ENCODE measurements at regions of chr11 and their contacts with region 1.

Region 1: DNA sequence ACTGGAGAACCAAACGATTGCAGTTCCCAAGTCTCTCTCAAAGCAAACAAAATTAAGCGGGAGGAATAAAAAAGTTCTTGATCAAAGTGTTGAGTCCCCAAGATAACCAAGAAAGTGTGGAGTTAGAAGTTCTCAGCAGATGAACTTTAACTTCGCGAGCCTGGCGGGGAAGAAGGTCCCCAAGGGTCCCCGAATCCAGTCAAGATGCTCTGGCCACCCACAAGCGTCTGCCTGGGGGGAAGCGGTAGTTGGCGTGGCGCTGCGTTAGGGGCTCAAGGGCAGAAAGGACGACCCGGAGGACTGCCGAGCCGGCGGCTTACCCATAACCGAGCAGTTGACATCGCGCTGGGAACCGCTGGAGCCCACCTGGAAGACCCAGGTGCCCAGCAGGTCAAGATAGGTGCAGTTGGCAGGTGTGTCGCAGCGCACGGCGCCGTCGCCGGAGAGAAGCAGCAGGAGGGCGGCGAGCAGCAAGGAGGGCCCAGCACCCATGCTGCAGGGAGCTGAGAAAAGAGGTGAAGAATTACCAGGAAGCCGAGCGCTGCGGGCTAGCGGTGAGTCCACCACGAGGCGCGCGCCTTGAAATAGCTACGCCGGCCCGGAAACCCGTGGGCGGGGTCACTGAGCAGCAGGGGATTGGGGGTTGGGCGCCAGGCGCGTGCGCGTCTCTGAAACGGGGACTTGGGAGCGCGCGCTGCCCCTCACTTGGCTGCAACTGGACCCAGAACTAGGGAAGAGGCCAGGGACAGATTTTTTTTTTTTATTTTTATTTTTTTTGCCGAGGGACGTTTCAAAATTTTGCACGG is at the start of gene CTSC:
- DNase-seq: peak; percentile 80
- ATAC-seq: peak; percentile 91
- H3K4me3 Mint-ChIP-seq: peak within 1 kb of the TSS; percentile 100
- H3K27ac Mint-ChIP-seq: peak within 1 kb of the TSS; percentile 86
- H3K4me1 Mint-ChIP-seq: peaks cover 43% of the 10 kb centered on the region
- H3K27me3 Mint-ChIP-seq: no peaks in the 10 kb centered on the region
- CTCF ChIP-seq: no peak
- total RNA-seq, gene CTSC: 30.6 and 31.2 TPM in 2 replicates

Region 2: DNA sequence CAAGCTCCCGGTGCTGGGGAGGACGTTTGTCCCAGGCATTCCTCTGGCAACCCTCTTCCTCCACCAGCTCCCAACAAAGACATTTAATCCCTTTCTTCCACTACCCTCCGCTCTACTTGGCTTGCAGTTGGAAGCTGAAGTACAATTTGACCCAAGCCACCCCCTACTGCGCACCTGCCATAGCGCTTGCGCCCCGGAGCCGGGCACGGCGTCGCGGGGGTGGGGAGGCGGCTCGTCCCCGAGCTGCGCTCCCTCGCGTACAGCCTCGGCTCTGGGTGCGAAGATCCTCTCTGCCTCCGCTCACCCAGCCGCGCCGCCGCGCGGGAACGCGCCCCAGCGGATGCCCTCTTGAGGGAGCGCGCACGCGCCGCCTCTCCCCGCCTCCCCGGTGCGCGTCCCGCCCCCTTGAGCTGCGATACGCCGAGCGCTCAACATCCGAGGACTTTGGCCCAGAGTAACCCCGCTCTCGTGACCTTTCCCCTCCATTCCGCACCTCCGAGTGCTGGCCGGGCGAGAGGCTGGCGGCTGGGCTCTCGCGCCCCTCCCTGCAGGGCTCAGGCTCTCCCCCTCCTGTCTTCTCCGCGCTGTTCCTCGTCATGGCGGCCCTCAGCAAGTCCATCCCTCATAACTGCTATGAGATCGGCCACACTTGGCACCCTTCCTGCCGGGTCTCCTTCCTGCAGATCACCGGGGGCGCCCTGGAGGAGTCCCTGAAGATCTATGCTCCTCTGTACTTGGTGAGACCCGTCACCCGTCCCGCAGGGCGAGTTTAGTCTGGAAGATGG is 1299.7 kb before region 1 on chr11 and contains the start of gene TMEM135:
- CTCF ChIA-PET with region 1: no interaction called
- POLR2A ChIA-PET with region 1: no interaction called
- intact Hi-C with region 1: loop called (anchors 1 kb)
- DNase-seq: peak; percentile 91
- ATAC-seq: peak; percentile 96
- H3K4me3 Mint-ChIP-seq: peak within 1 kb of the TSS; percentile 99
- H3K27ac Mint-ChIP-seq: peak within 1 kb of the TSS; percentile 75
- H3K4me1 Mint-ChIP-seq: peaks cover 34% of the 10 kb centered on the region
- H3K27me3 Mint-ChIP-seq: no peaks in the 10 kb centered on the region
- CTCF ChIP-seq: no peak
- total RNA-seq, gene TMEM135: 7.4 and 10.1 TPM in 2 replicates

Region 3: GRCh38 chr11:88231894-88232482 is 105.4 kb before region 1 on chr11:
- CTCF ChIA-PET with region 1: no interaction called
- POLR2A ChIA-PET with region 1: no interaction called
- intact Hi-C with region 1: loop called (anchors 5 kb)
- DNase-seq: no peak
- ATAC-seq: no peak
- H3K4me3 Mint-ChIP-seq: no peak overlapping the region
- H3K27ac Mint-ChIP-seq: no peak overlapping the region
- H3K4me1 Mint-ChIP-seq: no peaks in the 10 kb centered on the region
- H3K27me3 Mint-ChIP-seq: no peaks in the 10 kb centered on the region
- CTCF ChIP-seq: no peak

Region 4: DNA sequence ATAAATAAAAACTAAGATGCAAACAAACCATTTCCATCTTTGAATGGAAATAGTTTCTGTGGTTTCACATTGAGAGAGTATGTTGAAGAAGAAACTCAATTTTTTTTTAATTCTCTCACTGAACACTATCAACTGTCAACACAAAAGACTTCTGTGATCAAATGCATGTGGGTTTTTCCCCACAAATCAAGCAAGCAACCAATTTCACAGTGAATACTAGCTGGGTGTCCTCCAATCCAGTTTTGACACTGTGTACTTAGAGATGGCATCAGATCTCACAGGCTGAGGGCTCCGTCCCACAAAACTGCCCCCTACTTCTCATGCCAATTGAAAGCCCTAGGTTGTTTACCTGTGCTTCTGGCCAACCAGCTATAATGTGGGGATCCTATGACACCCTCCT is 34.3 kb before region 1 on chr11:
- CTCF ChIA-PET with region 1: no interaction called
- POLR2A ChIA-PET with region 1: interaction called, 7 read pairs
- intact Hi-C with region 1: loop called (anchors 1 kb)
- DNase-seq: no peak
- ATAC-seq: no peak
- H3K4me3 Mint-ChIP-seq: no peak overlapping the region
- H3K27ac Mint-ChIP-seq: peak overlapping the region; percentile 6
- H3K4me1 Mint-ChIP-seq: peaks cover 27% of the 10 kb centered on the region
- H3K27me3 Mint-ChIP-seq: no peaks in the 10 kb centered on the region
- CTCF ChIP-seq: no peak

Region 5: GRCh38 chr11:88327061-88327460 is 10.3 kb before region 1 on chr11:
- CTCF ChIA-PET with region 1: no interaction called
- POLR2A ChIA-PET with region 1: interaction called, 20 read pairs
- intact Hi-C with region 1: loop called (anchors 1 kb)
- DNase-seq: no peak
- ATAC-seq: peak; percentile 47
- H3K4me3 Mint-ChIP-seq: no peak overlapping the region
- H3K27ac Mint-ChIP-seq: no peak overlapping the region
- H3K4me1 Mint-ChIP-seq: peaks cover 46% of the 10 kb centered on the region
- H3K27me3 Mint-ChIP-seq: no peaks in the 10 kb centered on the region
- CTCF ChIP-seq: no peak

Region 6: GRCh38 chr11:88353835-88354496 is 16.6 kb after region 1 on chr11:
- CTCF ChIA-PET with region 1: no interaction called
- POLR2A ChIA-PET with region 1: interaction called, 26 read pairs
- intact Hi-C with region 1: loop called (anchors 1 kb)
- DNase-seq: no peak
- ATAC-seq: no peak
- H3K4me3 Mint-ChIP-seq: peak overlapping the region; percentile 41
- H3K27ac Mint-ChIP-seq: peak overlapping the region; percentile 57
- H3K4me1 Mint-ChIP-seq: peaks cover 32% of the 10 kb centered on the region
- H3K27me3 Mint-ChIP-seq: no peaks in the 10 kb centered on the region
- CTCF ChIP-seq: no peak

Region 7: GRCh38 chr11:88552377-88553062 is 215.1 kb after region 1 on chr11:
- CTCF ChIA-PET with region 1: no interaction called
- POLR2A ChIA-PET with region 1: no interaction called
- intact Hi-C with region 1: no loop called
- DNase-seq: peak; percentile 21
- ATAC-seq: peak; percentile 40
- H3K4me3 Mint-ChIP-seq: no peak overlapping the region
- H3K27ac Mint-ChIP-seq: no peak overlapping the region
- H3K4me1 Mint-ChIP-seq: no peaks in the 10 kb centered on the region
- H3K27me3 Mint-ChIP-seq: peaks cover 4% of the 10 kb centered on the region
- CTCF ChIP-seq: no peak

Region 8: DNA sequence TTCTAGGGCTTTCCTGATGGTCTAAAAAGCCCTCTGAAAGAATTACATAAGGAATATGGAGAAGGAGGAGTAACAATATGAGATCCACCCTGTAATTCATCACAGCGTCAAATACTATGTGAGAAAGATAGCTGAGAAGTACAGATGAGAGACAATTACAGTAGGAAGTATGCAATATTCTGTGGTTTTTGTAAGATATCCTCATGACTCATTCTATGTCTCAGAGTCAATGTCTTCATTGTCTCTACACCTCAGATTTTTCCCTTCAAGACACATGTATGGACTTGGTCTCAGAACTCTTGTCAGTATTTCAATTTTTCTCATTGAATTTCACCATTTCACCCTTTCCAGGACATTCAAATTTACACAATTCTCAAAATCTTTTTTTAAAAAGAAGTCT is 343.4 kb after region 1 on chr11:
- CTCF ChIA-PET with region 1: no interaction called
- POLR2A ChIA-PET with region 1: no interaction called
- intact Hi-C with region 1: no loop called
- DNase-seq: no peak
- ATAC-seq: no peak
- H3K4me3 Mint-ChIP-seq: no peak overlapping the region
- H3K27ac Mint-ChIP-seq: no peak overlapping the region
- H3K4me1 Mint-ChIP-seq: no peaks in the 10 kb centered on the region
- H3K27me3 Mint-ChIP-seq: no peaks in the 10 kb centered on the region
- CTCF ChIP-seq: no peak

Region 9: DNA sequence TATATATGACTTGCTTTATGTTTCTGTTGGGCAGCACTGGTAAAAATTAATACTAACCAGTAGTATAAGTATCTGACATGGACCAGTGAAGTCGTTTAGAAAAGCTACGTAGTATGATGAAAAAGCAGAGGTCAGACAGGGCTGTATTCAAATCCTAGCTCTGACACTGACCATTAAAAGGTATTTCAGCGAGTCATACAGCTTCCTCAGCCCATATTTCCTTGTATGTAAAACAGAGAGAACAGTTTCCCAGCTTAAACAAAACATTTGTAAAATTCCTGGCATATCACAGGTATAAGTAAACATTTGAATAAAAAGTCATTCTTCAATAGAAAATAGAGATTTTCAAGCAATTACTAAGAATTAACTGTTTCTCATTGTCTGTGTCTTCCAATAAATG is 1149.6 kb after region 1 on chr11:
- CTCF ChIA-PET with region 1: no interaction called
- POLR2A ChIA-PET with region 1: no interaction called
- intact Hi-C with region 1: no loop called
- DNase-seq: no peak
- ATAC-seq: no peak
- H3K4me3 Mint-ChIP-seq: no peak overlapping the region
- H3K27ac Mint-ChIP-seq: no peak overlapping the region
- H3K4me1 Mint-ChIP-seq: no peaks in the 10 kb centered on the region
- H3K27me3 Mint-ChIP-seq: peaks cover 11% of the 10 kb centered on the region
- CTCF ChIP-seq: no peak

Region 10: GRCh38 chr11:90222459-90223247 is 1885.3 kb after region 1 on chr11 and contains the start of gene CHORDC1:
- CTCF ChIA-PET with region 1: no interaction called
- POLR2A ChIA-PET with region 1: no interaction called
- intact Hi-C with region 1: loop called (anchors 5 kb)
- DNase-seq: peak; percentile 93
- ATAC-seq: peak; percentile 92
- H3K4me3 Mint-ChIP-seq: peak within 1 kb of the TSS; percentile 97
- H3K27ac Mint-ChIP-seq: peak within 1 kb of the TSS; percentile 91
- H3K4me1 Mint-ChIP-seq: peaks cover 48% of the 10 kb centered on the region
- H3K27me3 Mint-ChIP-seq: no peaks in the 10 kb centered on the region
- CTCF ChIP-seq: no peak
- total RNA-seq, gene CHORDC1: 61.2 and 63.4 TPM in 2 replicates

Measured in activated B cell treated with CpG ODN at 0.5 μM for 24 hours (primary cell).